T-cell (primary cell): ENCODE measurements at regions of chr12 and their contacts with region 1.

Region 1: DNA sequence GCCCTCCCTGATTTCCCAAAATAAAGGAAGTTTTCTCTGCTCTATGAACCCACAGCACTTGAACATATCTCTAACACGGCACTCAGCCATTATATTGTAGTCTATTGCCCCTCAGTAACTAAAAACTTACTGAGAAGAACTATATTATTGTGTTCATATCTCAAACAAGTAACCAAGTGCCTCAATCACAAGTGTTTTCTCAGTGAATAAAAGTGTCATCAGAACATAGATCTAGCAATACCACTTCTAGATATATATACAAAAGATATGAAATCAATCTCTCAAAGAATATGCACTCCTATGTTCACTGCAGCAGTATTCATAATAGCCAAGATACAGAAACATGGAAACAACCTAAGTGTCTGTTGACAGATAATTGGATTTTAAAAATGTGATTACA is 138.1 kb downstream of the NELL2 start:
- DNase-seq: no peak
- ATAC-seq: no peak
- H3K4me3 ChIP-seq: no peak overlapping the region
- H3K4me3 Mint-ChIP-seq: no peak overlapping the region
- H3K27ac ChIP-seq: no peak overlapping the region
- H3K27ac Mint-ChIP-seq: no peak overlapping the region
- H3K4me1 ChIP-seq: no peaks in the 10 kb centered on the region
- H3K4me1 Mint-ChIP-seq: peaks cover 0 to 2% (median 0%) of the 10 kb centered on the region in 3 donors
- H3K27me3 ChIP-seq: peaks cover 0 to 2% of the 10 kb centered on the region in 2 experiments
- H3K27me3 Mint-ChIP-seq: no peaks in the 10 kb centered on the region

Region 2: GRCh38 chr12:44748950-44749468 is 11.0 kb after region 1 on chr12:
- CTCF ChIA-PET with region 1: interaction called in 1 of 2 experiments, 3 read pairs
- POLR2A ChIA-PET with region 1: interaction called in 1 of 2 experiments, 10 read pairs
- DNase-seq: no peak
- ATAC-seq: no peak
- H3K4me3 ChIP-seq: no peak overlapping the region
- H3K4me3 Mint-ChIP-seq: no peak overlapping the region
- H3K27ac ChIP-seq: no peak overlapping the region
- H3K27ac Mint-ChIP-seq: no peak overlapping the region
- H3K4me1 ChIP-seq: no peaks in the 10 kb centered on the region
- H3K4me1 Mint-ChIP-seq: peaks cover 15 to 30% (median 20%) of the 10 kb centered on the region in 3 donors
- H3K27me3 ChIP-seq: no peaks in the 10 kb centered on the region
- H3K27me3 Mint-ChIP-seq: no peaks in the 10 kb centered on the region